Activated B cell treated with CpG ODN at 0.5 μM for 24 hours (primary cell): ENCODE measurements at regions of chr2 and their contacts with region 1.

Region 1: GRCh38 chr2:159516241-159516766 is 100.0 kb downstream of the BAZ2B start:
- DNase-seq: no peak
- ATAC-seq: peak; percentile 89
- H3K4me3 Mint-ChIP-seq: peak overlapping the region; percentile 85
- H3K27ac Mint-ChIP-seq: peak overlapping the region; percentile 87
- H3K4me1 Mint-ChIP-seq: peaks cover 31% of the 10 kb centered on the region
- H3K27me3 Mint-ChIP-seq: no peaks in the 10 kb centered on the region
- CTCF ChIP-seq: no peak

Region 2: GRCh38 chr2:159286709-159287441 is 229.4 kb before region 1 on chr2:
- CTCF ChIA-PET with region 1: no interaction called
- POLR2A ChIA-PET with region 1: interaction called, 3 read pairs
- intact Hi-C with region 1: loop called (anchors 1 kb)
- DNase-seq: peak; percentile 97
- ATAC-seq: peak; percentile 99
- H3K4me3 Mint-ChIP-seq: peak overlapping the region; percentile 93
- H3K27ac Mint-ChIP-seq: peak overlapping the region; percentile 84
- H3K4me1 Mint-ChIP-seq: peaks cover 41% of the 10 kb centered on the region
- H3K27me3 Mint-ChIP-seq: peaks cover 2% of the 10 kb centered on the region
- CTCF ChIP-seq: no peak

Region 3: DNA sequence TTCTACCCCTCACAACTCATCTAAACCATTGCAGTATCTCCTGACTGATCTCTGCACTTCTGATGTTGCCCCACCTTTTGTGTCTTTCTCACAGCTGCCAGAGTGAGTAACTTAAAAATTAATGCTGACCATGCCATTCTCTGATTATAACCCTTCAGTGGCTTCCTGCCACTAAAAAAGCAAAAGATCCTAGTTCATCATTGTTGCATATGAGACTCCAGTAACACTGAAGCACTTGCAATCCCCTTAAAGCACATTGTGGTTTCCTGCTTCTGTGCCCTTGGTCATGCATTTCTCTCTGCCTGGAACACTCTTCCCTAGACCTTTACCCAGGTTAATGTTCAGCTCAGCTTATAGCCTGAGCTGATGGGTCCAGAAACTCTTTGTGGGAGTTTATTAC is 134.7 kb before region 1 on chr2:
- CTCF ChIA-PET with region 1: no interaction called
- POLR2A ChIA-PET with region 1: no interaction called
- intact Hi-C with region 1: no loop called
- DNase-seq: no peak
- ATAC-seq: no peak
- H3K4me3 Mint-ChIP-seq: no peak overlapping the region
- H3K27ac Mint-ChIP-seq: no peak overlapping the region
- H3K4me1 Mint-ChIP-seq: no peaks in the 10 kb centered on the region
- H3K27me3 Mint-ChIP-seq: no peaks in the 10 kb centered on the region
- CTCF ChIP-seq: no peak